Right ventricle myocardium inferior (tissue), 1 donor: ENCODE measurements at regions of chr13 and their contacts with region 1.

Region 1: GRCh38 chr13:61136093-61136492 is 279.6 kb downstream of the PCDH20 start:
- DNase-seq: no peak
- ATAC-seq: peak; percentile 88

Region 2: DNA sequence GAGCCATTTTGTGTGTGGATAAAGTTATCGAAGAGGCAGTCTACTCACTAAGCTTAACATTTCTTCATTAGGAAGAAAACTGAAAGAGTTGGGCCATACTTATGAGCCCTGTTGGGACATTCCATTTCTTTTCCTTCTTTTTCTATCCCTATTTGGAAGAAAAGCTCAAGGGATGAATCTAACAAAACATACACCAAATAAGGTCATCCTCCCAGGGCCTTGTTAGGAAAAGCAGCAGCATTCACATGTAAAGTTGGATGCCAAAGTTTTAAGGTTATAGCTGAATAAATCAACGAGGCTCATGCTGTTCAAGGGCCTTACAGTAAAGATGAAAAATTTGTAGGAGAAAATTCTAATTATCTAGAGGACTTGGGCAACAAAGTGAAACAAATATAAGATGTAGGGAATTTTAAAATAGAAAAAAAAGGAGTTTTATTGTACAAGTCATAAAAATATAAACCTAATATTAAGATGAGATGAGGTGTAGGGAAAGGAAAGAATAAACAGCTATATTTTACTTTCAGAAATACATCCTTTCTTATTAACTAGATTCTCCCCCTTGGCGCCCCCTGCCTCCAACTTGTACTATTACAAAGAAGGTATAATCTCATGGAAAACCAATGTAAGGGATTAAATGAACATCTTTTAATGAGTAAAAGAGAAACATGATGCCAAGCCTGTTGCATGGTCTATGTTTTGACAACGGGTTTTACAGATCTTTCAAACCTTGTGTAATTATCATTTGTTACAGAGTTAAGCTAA is 119.1 kb after region 1 on chr13:
- intact Hi-C with region 1: loop called (anchors 10 kb)
- DNase-seq: no peak
- ATAC-seq: no peak